Sciatic nerve (tissue), 2 donors: ENCODE measurements at regions of chr19 and their contacts with region 1.

Region 1: DNA sequence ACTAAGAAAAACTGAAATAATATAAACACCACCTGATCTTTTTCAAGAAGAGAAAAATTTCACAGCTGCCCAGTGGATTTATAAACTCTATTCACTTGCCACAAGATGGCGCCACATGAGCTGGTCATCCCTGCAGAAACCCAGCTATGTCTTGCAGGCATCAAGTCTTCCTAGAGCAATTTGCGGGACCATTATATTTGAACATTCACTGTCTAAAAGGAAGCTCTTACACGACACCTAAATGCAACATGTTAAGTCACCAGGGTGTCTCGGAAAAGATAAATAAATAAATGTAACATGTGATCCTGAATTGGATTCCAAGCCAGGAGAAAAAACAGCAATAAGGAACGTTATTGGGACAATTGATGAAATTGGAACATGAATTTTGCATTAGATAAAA is 20.3 kb upstream of the AKT2 start:
- DNase-seq: peak; percentile 89
- ATAC-seq: peak; percentile 83

Region 2: DNA sequence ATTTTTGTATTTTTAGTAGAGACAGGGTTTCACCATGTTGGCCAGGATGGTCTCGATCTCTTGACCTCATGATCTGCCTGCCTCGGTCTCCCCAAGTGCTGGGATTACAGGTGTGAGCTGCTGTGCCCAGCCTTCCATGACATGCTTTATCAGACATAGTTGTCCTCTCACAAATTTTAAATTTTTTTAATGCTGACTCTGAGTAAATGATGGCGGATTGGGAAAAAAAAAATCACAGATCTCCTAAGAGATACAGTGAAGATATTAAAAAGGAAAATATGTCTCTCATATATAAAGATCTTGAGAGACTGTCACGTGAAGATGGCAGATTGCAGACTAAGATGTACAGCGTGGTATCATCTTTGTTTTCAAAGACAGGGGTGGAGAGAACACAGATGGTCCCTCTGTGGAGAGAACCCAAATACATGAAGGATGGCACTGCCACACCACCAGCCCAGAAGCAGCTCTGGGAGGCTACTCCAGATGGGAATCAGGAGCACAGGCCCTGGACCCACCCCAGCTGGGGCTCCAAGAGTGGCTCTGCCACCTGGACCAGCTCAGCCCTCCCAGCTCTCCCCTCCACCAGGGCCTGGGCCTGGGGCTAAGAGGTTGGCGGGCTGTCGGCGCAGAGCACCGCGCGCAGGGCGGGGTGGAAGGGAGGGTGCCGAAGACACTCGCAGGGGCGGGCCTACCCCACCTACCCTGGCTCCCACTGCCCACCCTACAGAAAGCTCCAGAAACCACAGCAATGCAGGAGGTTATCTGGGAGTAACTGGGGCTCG is 58.9 kb before region 1 on chr19:
- intact Hi-C with region 1: no loop called
- DNase-seq: no peak
- ATAC-seq: no peak

Region 3: GRCh38 chr19:40598121-40598917 is 292.9 kb after region 1 on chr19:
- intact Hi-C with region 1: loop called (anchors 5 kb)
- DNase-seq: peak; percentile 94
- ATAC-seq: peak; percentile 71